A673 (cell line): ENCODE measurements at regions of chr5 and their contacts with region 1.

Region 1: GRCh38 chr5:127660047-127660733 is 11.3 kb downstream of the CTXN3 start:
- DNase-seq: no peak
- H3K4me3 ChIP-seq: no peak overlapping the region
- H3K27ac ChIP-seq: no peak overlapping the region
- H3K4me1 ChIP-seq: no peaks in the 10 kb centered on the region
- H3K27me3 ChIP-seq: peaks cover 79% of the 10 kb centered on the region
- CTCF ChIP-seq: no peak

Region 2: GRCh38 chr5:127682482-127682881 is 22.3 kb after region 1 on chr5:
- CTCF ChIA-PET with region 1: no interaction called
- POLR2A ChIA-PET with region 1: no interaction called
- intact Hi-C with region 1: loop called (anchors 1 kb)
- DNase-seq: no peak
- H3K4me3 ChIP-seq: no peak overlapping the region
- H3K27ac ChIP-seq: no peak overlapping the region
- H3K4me1 ChIP-seq: no peaks in the 10 kb centered on the region
- H3K27me3 ChIP-seq: peaks cover 4% of the 10 kb centered on the region
- CTCF ChIP-seq: no peak